ENCODE measurements at regions of chr3 and their contacts with region 1.

Region 1: DNA sequence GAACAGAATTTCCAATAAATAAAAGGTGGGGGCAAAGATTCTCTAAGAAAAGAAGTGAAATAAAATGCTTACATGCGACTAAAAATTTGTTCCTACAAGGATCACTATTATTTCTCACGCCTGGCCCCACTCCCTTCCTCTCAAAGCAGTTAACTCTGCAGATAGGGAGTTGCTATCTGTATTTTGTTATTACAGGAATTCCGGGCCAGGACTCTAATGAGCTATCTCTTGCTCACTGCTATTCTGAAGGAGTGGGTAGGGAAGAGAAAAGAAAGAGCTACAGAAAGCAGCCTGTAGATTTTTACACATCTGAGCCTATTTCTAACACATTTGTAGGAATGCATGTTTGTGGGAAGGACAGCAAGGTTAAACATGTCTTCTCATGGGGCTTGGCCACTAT is 140.4 kb downstream of the PCCB start:
- DNase-seq: no peak
- ATAC-seq: no peak
- H3K4me3 Mint-ChIP-seq: no peak overlapping the region
- H3K27ac Mint-ChIP-seq: no peak overlapping the region
- H3K4me1 Mint-ChIP-seq: no peaks in the 10 kb centered on the region
- H3K27me3 Mint-ChIP-seq: no peaks in the 10 kb centered on the region
- CTCF ChIP-seq: no peak

Region 2: GRCh38 chr3:136404056-136404455 is 13.5 kb after region 1 on chr3:
- CTCF ChIA-PET with region 1: interaction called, 12 read pairs
- POLR2A ChIA-PET with region 1: no interaction called
- intact Hi-C with region 1: no loop called
- DNase-seq: no peak
- ATAC-seq: no peak
- H3K4me3 Mint-ChIP-seq: no peak overlapping the region
- H3K27ac Mint-ChIP-seq: no peak overlapping the region
- H3K4me1 Mint-ChIP-seq: no peaks in the 10 kb centered on the region
- H3K27me3 Mint-ChIP-seq: no peaks in the 10 kb centered on the region
- CTCF ChIP-seq: no peak

Region 3: DNA sequence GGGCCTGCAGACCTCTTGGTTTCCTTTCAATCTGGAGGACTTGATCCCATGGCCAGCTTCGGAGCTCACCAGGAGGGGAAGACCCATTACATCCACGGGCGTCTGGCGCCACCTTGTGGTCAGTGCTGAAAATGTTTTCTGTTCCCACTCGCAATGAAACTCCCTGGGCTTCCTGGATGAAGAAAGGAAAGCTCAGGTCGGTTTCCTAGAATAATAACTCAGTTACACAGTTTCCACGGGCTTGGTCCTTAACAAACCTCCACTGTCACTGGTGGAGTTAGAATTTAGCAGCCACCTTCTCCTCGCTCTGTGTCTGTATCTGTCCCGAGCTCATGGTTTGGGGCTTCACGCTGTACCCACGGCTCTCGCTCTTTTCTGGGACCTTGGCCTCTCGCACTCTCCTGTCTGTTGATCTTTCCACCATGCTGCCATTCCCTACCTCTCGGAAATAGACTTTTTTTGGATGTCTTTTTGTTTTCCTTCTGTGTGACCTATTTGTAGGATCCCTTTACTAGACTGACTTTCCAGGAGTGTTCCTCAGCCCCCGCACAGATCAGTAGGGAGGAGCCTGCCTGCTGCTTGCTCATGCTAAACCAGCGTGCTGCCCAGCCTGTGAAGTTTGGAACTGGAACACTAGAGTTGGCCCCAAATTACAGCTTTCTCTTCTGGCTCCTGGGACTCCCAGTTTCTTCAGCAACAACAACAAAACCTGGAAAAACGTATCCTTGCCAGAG is 623.5 kb after region 1 on chr3:
- CTCF ChIA-PET with region 1: interaction called, 17 read pairs
- POLR2A ChIA-PET with region 1: no interaction called
- intact Hi-C with region 1: no loop called
- DNase-seq: peak; percentile 85
- ATAC-seq: peak; percentile 88
- H3K4me3 Mint-ChIP-seq: peak overlapping the region; percentile 63
- H3K27ac Mint-ChIP-seq: peak overlapping the region; percentile 70
- H3K4me1 Mint-ChIP-seq: peaks cover 8% of the 10 kb centered on the region
- H3K27me3 Mint-ChIP-seq: no peaks in the 10 kb centered on the region
- CTCF ChIP-seq: peak; percentile 85

Measured in activated CD8-positive, alpha-beta T cell treated with anti-CD3 and anti-CD28 coated beads for 36 hours (primary cell).